Posterior vena cava (tissue), 2 donors: ENCODE measurements at regions of chr2 and their contacts with region 1.

Region 1: GRCh38 chr2:96960153-96960961 is 26.0 kb downstream of the FAM178B start:
- DNase-seq: peak; percentile 97

Region 2: GRCh38 chr2:96594691-96595152 is 365.6 kb before region 1 on chr2:
- intact Hi-C with region 1: no loop called
- DNase-seq: no peak

Region 3: DNA sequence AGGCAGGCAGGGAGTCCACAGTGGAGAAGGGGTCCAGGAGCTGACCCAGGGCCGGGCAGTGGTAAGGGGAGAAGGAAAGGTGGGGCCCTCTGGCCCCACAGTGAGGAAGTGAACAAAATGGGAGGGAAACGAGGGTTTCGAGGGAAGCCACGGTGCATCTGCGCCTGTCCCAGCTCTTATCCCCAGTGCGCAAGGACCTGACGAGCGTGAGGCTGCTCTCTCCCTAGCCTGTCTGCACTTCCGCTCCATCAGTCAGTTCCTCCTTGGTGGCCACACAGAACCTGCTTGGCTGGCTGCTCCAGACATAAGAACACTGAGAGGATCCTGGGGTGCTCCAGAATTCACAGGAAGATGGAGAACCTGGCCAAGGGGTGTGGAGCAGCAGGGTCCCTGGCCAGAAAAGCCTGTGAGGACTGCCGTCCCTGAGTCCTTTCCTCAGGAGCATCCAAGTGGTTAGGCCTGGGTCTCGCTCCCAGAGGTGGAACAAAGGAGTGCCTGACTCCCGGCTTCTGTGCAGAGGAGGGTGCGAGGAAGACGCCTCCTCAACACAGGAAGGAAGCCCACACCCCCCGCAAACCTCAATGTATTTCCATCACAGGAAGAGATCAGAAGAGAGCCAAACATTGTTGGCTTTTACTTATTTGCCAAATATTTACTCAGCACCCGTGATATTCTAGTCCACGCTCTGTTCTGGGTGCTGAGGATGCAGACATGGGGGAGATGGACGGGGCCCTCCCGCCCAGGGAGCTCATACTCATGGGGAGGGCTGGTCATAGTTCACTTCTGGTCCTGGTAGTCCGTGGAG is 46.8 kb before region 1 on chr2:
- intact Hi-C with region 1: loop called in 1 of 2 experiments (anchors 5 kb)
- DNase-seq: no peak

Region 4: DNA sequence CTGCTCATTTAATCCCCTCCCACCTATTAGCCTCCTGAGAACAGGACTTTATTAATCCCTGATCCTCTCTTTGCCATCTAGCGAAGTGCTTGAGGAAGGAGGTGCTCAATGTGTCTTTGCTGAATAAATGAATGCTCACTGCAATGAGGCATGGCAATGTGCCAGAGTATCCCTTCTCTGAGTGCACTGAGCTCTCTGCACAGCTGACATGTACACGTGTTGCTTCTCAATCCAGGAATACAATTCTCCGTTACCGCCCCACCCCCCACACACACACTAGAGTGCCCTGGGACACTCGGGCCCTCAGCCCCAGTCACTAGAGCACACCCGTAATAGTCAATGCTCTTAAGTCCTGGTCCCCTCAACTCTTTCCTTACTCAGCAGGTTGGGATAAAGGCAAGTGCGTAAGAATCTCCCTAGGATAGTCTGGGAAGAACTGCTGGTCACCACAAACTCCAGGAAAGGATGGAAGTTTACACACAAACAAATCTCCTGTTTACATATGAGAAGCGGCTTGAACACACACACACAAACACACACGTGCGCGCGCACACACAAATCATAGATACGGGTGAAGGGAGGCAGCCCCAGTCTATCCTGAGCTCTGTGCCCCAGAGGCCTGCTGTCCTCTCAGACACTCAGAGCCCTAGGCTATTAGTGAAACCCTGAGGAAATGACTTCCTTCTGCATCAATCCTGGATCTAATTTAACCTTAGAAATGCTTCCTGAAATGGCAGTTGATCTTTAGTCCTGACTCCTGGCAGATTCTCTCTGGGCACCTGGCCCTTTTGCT is 15.1 kb before region 1 on chr2:
- intact Hi-C with region 1: no loop called
- DNase-seq: peak; percentile 36